ENCODE measurements at regions of chr5 and their contacts with region 1.

Region 1: GRCh38 chr5:79235634-79236363 is at the start of gene JMY:
- DNase-seq: peak; percentile 83 to 90 (median 86)
- H3K4me3 ChIP-seq: peak within 1 kb of the TSS; percentile 83 to 93
- H3K4me3 Mint-ChIP-seq: peak within 1 kb of the TSS; percentile 95 to 99 (median 96)
- H3K27ac ChIP-seq: peak within 1 kb of the TSS; percentile 96
- H3K27ac Mint-ChIP-seq: peak within 1 kb of the TSS; percentile 96 to 99 (median 98)
- H3K4me1 ChIP-seq: peaks cover 40% of the 10 kb centered on the region
- H3K4me1 Mint-ChIP-seq: peaks cover 15 to 33% (median 25%) of the 10 kb centered on the region in 4 donors
- H3K27me3 ChIP-seq: no peaks in the 10 kb centered on the region
- H3K27me3 Mint-ChIP-seq: peaks cover 0 to 2% of the 10 kb centered on the region in 2 donors
- total RNA-seq, gene JMY: 25.7 to 29.7 TPM

Region 2: DNA sequence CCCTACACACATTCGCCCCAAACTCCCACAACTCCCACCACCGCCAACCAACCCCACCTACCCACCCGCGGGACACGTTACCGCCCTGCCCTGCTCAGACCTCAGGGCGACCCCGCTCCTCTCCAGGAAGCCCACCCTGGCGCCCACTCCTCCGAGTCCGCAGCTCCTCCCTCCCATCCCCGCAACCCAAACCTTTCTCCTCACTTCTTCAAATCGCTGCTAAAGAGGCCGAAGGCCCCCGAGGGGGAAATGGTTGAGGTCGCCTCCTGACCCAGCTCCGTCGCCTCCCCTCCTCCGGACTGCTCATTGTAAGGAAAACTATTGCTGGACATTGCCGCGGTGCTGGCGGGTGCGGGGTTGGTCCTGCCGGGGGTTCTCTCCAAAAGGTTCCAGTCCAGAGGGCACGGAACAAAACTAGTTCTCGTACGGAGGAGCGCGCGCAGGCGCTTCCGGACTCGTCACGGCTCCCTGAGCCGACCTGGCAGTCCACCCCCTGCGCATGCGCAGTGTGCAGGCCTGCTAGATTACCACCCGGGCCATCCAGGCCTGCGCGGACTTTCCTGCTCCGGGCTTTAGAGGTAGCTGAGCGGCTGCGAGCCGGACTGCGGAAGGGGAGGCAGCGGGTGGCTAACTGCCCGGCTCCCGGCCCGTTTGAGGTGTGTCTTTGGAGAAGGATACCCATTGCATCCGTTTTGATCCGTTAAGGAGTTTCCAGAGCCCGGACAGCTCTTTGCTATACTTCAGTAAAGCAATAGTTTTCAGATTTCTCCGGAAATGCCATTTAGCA is 941.4 kb before region 1 on chr5 and contains the start of gene AP3B1:
- CTCF ChIA-PET with region 1: no interaction called
- POLR2A ChIA-PET with region 1: no interaction called
- intact Hi-C with region 1: loop called (anchors 10 kb)
- DNase-seq: peak; percentile 96 to 97 (median 97)
- H3K4me3 ChIP-seq: peak within 1 kb of the TSS; percentile 88 to 99
- H3K4me3 Mint-ChIP-seq: peak within 1 kb of the TSS; percentile 91 to 100 (median 99)
- H3K27ac ChIP-seq: peak within 1 kb of the TSS; percentile 85
- H3K27ac Mint-ChIP-seq: peak within 1 kb of the TSS; percentile 86 to 100 (median 99)
- H3K4me1 ChIP-seq: peaks cover 29% of the 10 kb centered on the region
- H3K4me1 Mint-ChIP-seq: peaks cover 31 to 49% (median 41%) of the 10 kb centered on the region in 4 donors
- H3K27me3 ChIP-seq: no peaks in the 10 kb centered on the region
- H3K27me3 Mint-ChIP-seq: no peaks in the 10 kb centered on the region
- total RNA-seq, gene AP3B1: 33.3 to 36.9 TPM

Region 3: GRCh38 chr5:79255786-79256557 is 20.2 kb after region 1 on chr5:
- CTCF ChIA-PET with region 1: interaction called, 4 read pairs
- POLR2A ChIA-PET with region 1: interaction called, 10 read pairs
- intact Hi-C with region 1: no loop called
- DNase-seq: no peak
- H3K4me3 ChIP-seq: no peak overlapping the region
- H3K4me3 Mint-ChIP-seq: peak overlapping the region in 1 of 8 donors; percentile 22
- H3K27ac ChIP-seq: no peak overlapping the region
- H3K27ac Mint-ChIP-seq: peak overlapping the region in 3 of 7 donors; percentile 28 to 62 (median 58)
- H3K4me1 ChIP-seq: peaks cover 26% of the 10 kb centered on the region
- H3K4me1 Mint-ChIP-seq: peaks cover 30 to 67% (median 39%) of the 10 kb centered on the region in 4 donors
- H3K27me3 ChIP-seq: no peaks in the 10 kb centered on the region
- H3K27me3 Mint-ChIP-seq: no peaks in the 10 kb centered on the region

Region 4: GRCh38 chr5:79514391-79515105 is 278.7 kb after region 1 on chr5:
- CTCF ChIA-PET with region 1: interaction called, 3 read pairs
- POLR2A ChIA-PET with region 1: no interaction called
- intact Hi-C with region 1: loop called (anchors 5 kb)
- DNase-seq: peak; percentile 90 to 93 (median 92)
- H3K4me3 ChIP-seq: peak overlapping the region; percentile 71 to 84
- H3K4me3 Mint-ChIP-seq: peak overlapping the region; percentile 96 to 99 (median 96)
- H3K27ac ChIP-seq: peak overlapping the region; percentile 82
- H3K27ac Mint-ChIP-seq: peak overlapping the region; percentile 94 to 100 (median 99)
- H3K4me1 ChIP-seq: peaks cover 18% of the 10 kb centered on the region
- H3K4me1 Mint-ChIP-seq: peaks cover 13 to 25% (median 16%) of the 10 kb centered on the region in 4 donors
- H3K27me3 ChIP-seq: peaks cover 9% of the 10 kb centered on the region
- H3K27me3 Mint-ChIP-seq: peaks cover 15 to 18% of the 10 kb centered on the region in 2 donors

Region 5: GRCh38 chr5:80407735-80408482 is 1172.1 kb after region 1 on chr5 and contains the start of gene ZFYVE16:
- CTCF ChIA-PET with region 1: no interaction called
- POLR2A ChIA-PET with region 1: no interaction called
- intact Hi-C with region 1: loop called (anchors 5 kb)
- DNase-seq: peak; percentile 95 to 97 (median 96)
- H3K4me3 ChIP-seq: peak within 1 kb of the TSS; percentile 73 to 79
- H3K4me3 Mint-ChIP-seq: peak within 1 kb of the TSS; percentile 92 to 98 (median 96)
- H3K27ac ChIP-seq: peak within 1 kb of the TSS; percentile 86
- H3K27ac Mint-ChIP-seq: peak within 1 kb of the TSS; percentile 91 to 100 (median 99)
- H3K4me1 ChIP-seq: peaks cover 22% of the 10 kb centered on the region
- H3K4me1 Mint-ChIP-seq: peaks cover 15 to 24% (median 20%) of the 10 kb centered on the region in 4 donors
- H3K27me3 ChIP-seq: no peaks in the 10 kb centered on the region
- H3K27me3 Mint-ChIP-seq: no peaks in the 10 kb centered on the region
- total RNA-seq, gene ZFYVE16: 23.2 to 25.3 TPM

Measured in CD4-positive, alpha-beta memory T cell (primary cell).